ENCODE measurements at regions of chr2 and their contacts with region 1.

Region 1: DNA sequence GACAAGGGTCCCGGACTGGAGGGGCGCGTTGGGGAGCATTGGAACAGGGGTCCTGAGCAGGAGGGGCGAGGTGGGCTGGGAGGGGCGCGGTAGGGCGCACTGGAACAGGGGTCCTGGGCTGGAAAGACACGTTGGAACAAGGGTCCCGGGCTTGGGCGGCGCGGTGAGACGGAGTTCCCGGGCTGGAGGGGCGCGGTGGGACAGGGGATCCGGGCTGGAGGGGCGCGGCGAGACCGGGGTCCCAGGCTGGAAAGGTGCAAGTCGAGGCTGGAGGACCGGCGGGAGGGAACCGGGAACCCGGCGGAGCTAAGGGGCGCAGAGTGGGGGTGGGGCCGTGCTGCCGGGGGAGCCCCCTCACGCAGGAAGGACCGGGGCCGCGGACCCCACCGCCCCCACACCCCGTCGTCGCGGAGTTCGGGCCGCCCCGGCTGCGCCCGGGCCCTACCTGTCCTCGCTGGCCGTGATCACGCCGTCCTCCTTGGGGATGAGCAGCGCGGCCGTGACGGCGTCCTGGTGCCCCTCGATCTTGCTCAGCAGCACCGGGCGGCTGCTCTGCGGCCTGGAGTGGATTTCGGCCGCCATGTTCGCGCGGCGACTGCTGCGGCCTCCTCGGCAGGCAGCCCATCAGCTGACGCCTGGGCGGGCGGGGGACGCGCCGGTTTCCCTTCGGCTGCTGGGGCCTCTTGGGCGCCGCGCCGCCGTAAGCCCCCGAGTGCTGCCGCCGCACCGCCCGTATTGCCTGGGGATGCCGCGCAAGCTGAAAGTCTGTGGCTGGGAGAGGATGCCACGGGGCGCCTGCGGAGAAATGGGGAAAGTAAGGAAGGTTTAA is at the start of gene WDFY1:
- DNase-seq: peak; percentile 86
- H3K4me3 Mint-ChIP-seq: peak within 1 kb of the TSS; percentile 90
- H3K27ac Mint-ChIP-seq: peak within 1 kb of the TSS; percentile 90
- H3K4me1 Mint-ChIP-seq: peaks cover 58% of the 10 kb centered on the region
- H3K27me3 Mint-ChIP-seq: no peaks in the 10 kb centered on the region
- total RNA-seq, gene WDFY1: 66.2 to 70.9 TPM

Region 2: DNA sequence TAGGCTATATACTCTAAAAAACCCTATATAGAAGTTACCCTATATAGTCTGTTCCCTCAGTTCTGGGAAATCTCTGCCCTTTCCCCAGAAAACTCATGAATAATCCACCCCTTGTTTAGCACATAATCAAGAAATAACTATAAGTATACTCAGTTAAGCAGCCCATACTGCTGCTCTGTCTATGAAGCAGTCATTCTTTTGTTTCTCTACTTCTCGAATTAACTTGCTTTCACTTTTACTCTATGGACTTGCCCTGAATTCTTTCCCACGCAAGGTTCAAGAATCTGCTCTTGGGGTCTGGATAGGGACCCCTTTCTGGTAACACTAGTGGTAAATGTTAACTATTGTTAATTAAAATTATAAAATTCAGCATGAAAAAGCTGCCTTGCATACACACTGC is 90.2 kb before region 1 on chr2:
- CTCF ChIA-PET with region 1: no interaction called
- POLR2A ChIA-PET with region 1: no interaction called
- DNase-seq: no peak
- H3K4me3 Mint-ChIP-seq: no peak overlapping the region
- H3K27ac Mint-ChIP-seq: peak overlapping the region; percentile 59
- H3K4me1 Mint-ChIP-seq: peaks cover 30% of the 10 kb centered on the region
- H3K27me3 Mint-ChIP-seq: no peaks in the 10 kb centered on the region

Region 3: GRCh38 chr2:223930103-223930976 is 14.6 kb before region 1 on chr2:
- CTCF ChIA-PET with region 1: interaction called, 4 read pairs
- POLR2A ChIA-PET with region 1: interaction called, 16 read pairs
- DNase-seq: no peak
- H3K4me3 Mint-ChIP-seq: no peak overlapping the region
- H3K27ac Mint-ChIP-seq: peak overlapping the region; percentile 66
- H3K4me1 Mint-ChIP-seq: peaks cover 57% of the 10 kb centered on the region
- H3K27me3 Mint-ChIP-seq: no peaks in the 10 kb centered on the region

Region 4: DNA sequence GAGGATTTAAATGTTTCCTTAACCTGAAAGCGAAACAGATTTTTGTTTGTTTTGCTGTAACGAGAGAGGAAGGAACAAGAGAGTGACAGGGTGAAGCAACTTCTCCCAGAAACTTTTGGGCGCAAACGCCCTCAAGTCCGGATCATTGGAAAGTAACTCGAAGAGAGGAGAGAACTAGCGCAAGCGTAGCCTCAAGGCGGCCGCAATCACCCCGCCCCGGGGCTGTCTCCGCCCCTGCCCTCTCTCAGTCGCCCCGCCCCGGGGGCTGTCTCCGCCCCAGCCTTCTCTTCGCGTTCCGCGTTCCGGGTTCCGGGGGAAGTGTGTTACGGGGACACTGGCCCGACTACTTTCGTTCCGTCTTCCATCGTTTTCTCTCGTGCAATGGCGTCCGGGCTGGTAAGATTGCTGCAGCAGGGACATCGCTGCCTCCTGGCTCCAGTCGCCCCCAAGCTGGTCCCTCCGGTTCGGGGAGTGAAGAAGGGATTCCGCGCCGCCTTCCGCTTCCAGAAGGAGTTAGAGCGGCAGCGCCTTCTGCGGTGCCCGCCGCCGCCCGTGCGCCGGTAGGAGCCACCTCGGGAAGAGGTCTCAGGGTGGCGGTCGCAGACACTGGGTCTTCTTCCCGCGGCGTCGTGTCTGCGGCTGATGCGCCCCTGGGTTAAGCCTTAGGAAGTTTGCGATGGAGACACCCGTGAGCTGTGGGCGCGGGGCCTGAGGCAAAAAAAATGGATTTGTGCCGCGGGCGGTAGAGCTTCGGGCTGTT is 12.4 kb after region 1 on chr2 and contains the start of gene MRPL44:
- CTCF ChIA-PET with region 1: interaction called, 3 read pairs
- POLR2A ChIA-PET with region 1: interaction called, 87 read pairs
- DNase-seq: peak; percentile 97
- H3K4me3 Mint-ChIP-seq: peak within 1 kb of the TSS; percentile 91
- H3K27ac Mint-ChIP-seq: peak within 1 kb of the TSS; percentile 70
- H3K4me1 Mint-ChIP-seq: peaks cover 61% of the 10 kb centered on the region
- H3K27me3 Mint-ChIP-seq: no peaks in the 10 kb centered on the region
- total RNA-seq, gene MRPL44: 32.5 to 33.0 TPM